ENCODE measurements at regions of chrX and their contacts with region 1.

Region 1: GRCh38 chrX:107272431-107272921 is 66.1 kb downstream of the DNAAF6 start:
- DNase-seq: peak; percentile 61
- H3K4me3 Mint-ChIP-seq: peak overlapping the region; percentile 66
- H3K27ac Mint-ChIP-seq: no peak overlapping the region
- H3K4me1 Mint-ChIP-seq: no peaks in the 10 kb centered on the region
- H3K27me3 Mint-ChIP-seq: no peaks in the 10 kb centered on the region
- CTCF ChIP-seq: peak; percentile 55

Region 2: DNA sequence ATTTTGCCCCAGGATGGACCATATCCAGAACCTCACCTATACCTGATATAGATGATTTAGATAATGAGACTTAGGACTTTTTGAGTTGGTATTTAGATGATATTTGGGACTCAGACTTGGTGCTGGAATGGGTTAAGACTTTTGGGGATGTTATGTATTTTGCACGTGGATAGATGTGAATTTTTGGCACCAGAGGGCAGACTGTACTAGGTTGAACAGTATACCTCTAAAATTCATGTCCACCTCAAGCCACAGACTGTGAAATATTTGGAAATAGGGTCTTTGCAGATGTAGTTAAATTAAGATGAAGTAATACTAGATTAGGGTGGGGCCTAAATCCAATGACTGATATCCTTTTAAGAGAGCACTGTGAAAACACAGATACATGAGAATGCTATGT is 169.5 kb before region 1 on chrX:
- CTCF ChIA-PET with region 1: interaction called, 5 read pairs
- intact Hi-C with region 1: loop called (anchors 1 kb)
- DNase-seq: peak; percentile 2
- H3K4me3 Mint-ChIP-seq: no peak overlapping the region
- H3K27ac Mint-ChIP-seq: no peak overlapping the region
- H3K4me1 Mint-ChIP-seq: peaks cover 11% of the 10 kb centered on the region
- H3K27me3 Mint-ChIP-seq: no peaks in the 10 kb centered on the region
- CTCF ChIP-seq: no peak

Region 3: DNA sequence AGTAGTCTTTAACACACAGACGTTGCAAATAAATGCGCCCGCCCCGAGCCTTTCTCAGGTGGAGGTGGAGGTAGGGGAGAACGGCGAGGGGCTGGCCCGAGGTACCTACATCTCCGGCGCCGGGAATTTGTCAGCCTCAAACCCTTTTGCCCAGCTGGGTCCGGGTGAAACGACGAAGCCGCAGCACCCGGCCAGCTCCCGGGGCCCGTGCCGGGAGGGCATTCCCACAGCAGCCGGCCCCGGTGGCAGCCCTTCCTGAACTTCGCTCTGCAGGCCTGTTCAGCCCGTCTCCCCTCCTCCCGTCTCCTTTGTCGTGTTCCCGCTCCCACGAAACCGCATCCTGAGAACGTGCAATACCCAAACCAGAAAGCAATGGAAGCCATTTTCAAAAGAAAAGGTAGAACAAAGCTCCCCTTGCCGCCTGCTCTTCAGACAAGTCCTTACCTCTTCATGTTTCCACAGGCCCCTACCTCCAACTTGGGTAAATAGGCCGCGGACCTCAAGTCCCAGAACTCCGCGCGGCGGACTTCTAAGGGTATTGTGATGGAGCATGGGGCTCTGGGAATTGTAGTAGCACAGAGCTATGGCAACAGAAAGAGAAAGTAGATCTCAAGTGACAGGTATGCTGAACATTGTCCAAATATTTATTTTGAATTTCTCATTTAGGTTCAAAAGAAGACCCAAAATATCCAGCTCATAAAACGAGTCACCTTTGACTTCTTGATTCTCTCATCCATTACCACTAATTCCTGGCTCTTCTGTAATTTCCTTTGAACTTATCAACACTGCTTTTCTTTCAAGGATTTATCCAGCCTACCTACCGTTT is 153.9 kb before region 1 on chrX and contains the start of gene RBM41:
- CTCF ChIA-PET with region 1: interaction called, 13 read pairs
- intact Hi-C with region 1: no loop called
- DNase-seq: peak; percentile 71
- H3K4me3 Mint-ChIP-seq: peak within 1 kb of the TSS; percentile 92
- H3K27ac Mint-ChIP-seq: peak within 1 kb of the TSS; percentile 89
- H3K4me1 Mint-ChIP-seq: peaks cover 38% of the 10 kb centered on the region
- H3K27me3 Mint-ChIP-seq: no peaks in the 10 kb centered on the region
- CTCF ChIP-seq: no peak
- total RNA-seq, gene RBM41: 36.0 and 41.1 TPM in 2 replicates

Region 4: GRCh38 chrX:107324499-107325320 is 52.2 kb after region 1 on chrX:
- CTCF ChIA-PET with region 1: interaction called, 7 read pairs
- intact Hi-C with region 1: loop called (anchors 1 kb)
- DNase-seq: peak; percentile 18
- H3K4me3 Mint-ChIP-seq: no peak overlapping the region
- H3K27ac Mint-ChIP-seq: no peak overlapping the region
- H3K4me1 Mint-ChIP-seq: no peaks in the 10 kb centered on the region
- H3K27me3 Mint-ChIP-seq: peaks cover 28% of the 10 kb centered on the region
- CTCF ChIP-seq: peak; percentile 13

Measured in Calu3 (cell line).